ENCODE measurements at regions of chr7 and their contacts with region 1.

Region 1: DNA sequence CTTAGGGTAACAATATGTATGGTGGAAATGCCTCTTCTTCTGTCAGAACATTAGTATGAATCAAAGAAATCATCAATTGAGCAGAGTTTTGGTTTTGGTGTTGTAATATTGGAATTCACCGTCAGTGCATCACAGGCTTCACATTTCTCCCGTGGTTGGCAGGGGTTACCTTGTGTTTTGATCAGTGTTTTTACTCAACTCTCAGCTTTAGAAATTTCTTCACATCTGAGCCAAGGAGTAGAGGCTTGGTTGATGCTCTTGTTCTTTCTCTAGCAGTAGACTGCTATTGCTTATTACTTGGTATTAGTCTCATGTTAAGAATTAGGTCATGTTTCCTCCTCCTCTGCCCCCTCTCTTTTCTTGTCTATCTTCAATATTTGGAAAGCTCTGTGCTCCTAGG is 188.8 kb upstream of the SMIM30 start:
- DNase-seq: no peak
- H3K4me3 ChIP-seq: no peak overlapping the region
- H3K27ac ChIP-seq: no peak overlapping the region
- H3K4me1 ChIP-seq: no peaks in the 10 kb centered on the region
- H3K27me3 ChIP-seq: no peaks in the 10 kb centered on the region
- CTCF ChIP-seq: no peak
- POLR2A ChIP-seq: no peak

Region 2: GRCh38 chr7:112743811-112744210 is 563.3 kb before region 1 on chr7:
- CTCF ChIA-PET with region 1: no interaction called
- POLR2A ChIA-PET with region 1: no interaction called
- dilution Hi-C with region 1: no loop called
- intact Hi-C with region 1: no loop called
- DNase-seq: no peak
- H3K4me3 ChIP-seq: no peak overlapping the region
- H3K27ac ChIP-seq: no peak overlapping the region
- H3K4me1 ChIP-seq: no peaks in the 10 kb centered on the region
- H3K27me3 ChIP-seq: no peaks in the 10 kb centered on the region
- CTCF ChIP-seq: no peak
- POLR2A ChIP-seq: no peak

Region 3: DNA sequence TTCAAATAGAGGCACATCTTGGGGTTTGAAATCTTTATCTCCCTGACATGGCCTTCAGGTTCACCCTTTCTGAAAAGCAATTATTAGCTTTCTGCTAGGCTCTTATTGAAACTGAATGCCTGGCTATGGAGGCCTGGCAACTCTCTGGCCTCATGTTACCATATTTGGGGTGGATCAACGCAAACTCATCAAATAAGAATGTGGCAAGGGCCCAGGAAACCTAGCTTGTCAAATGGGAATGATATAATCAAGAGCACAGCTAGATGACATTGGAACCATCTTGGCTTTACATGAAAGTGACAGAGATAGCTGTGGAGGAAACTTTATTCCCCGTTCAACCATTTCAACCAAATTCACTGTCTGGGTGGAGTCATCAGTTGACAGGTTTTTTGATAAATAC is 14.1 kb after region 1 on chr7:
- CTCF ChIA-PET with region 1: no interaction called
- POLR2A ChIA-PET with region 1: no interaction called
- dilution Hi-C with region 1: no loop called
- intact Hi-C with region 1: loop called (anchors 1 kb)
- DNase-seq: no peak
- H3K4me3 ChIP-seq: no peak overlapping the region
- H3K27ac ChIP-seq: no peak overlapping the region
- H3K4me1 ChIP-seq: no peaks in the 10 kb centered on the region
- H3K27me3 ChIP-seq: no peaks in the 10 kb centered on the region
- CTCF ChIP-seq: no peak
- POLR2A ChIP-seq: no peak

Measured in endothelial cell of umbilical vein (primary cell).